ENCODE measurements at regions of chr10 and their contacts with region 1.

Region 1: GRCh38 chr10:23994479-23995046 is 214.4 kb upstream of the KIAA1217 start:
- H3K4me3 ChIP-seq: no peak overlapping the region
- H3K27ac ChIP-seq: no peak overlapping the region
- H3K4me1 ChIP-seq: no peaks in the 10 kb centered on the region
- CTCF ChIP-seq: no peak; the same call in 1 of the 2 replicates

Region 2: GRCh38 chr10:23793577-23793976 is 201.0 kb before region 1 on chr10:
- CTCF ChIA-PET with region 1: no interaction called
- POLR2A ChIA-PET with region 1: no interaction called
- H3K4me3 ChIP-seq: no peak overlapping the region
- H3K27ac ChIP-seq: no peak overlapping the region
- H3K4me1 ChIP-seq: no peaks in the 10 kb centered on the region
- CTCF ChIP-seq: no peak

Region 3: DNA sequence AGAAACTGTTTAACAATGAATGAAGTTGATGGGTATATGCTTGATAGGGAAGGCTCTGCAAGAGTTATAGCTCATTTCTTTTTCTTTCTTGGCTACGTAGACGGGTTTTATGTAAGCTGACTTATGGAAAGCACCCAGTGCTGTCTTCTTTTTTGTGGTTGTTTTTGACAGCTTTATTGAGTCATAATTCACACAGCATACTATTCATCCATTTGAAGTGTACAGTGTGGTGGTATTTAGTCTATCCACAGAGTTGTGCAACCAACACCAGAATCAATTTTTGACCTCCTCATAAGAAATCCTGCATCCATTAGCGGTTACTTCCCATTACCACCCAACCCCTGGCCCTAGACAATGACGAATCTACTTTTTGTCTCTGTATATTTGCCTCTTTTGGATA is 26.3 kb before region 1 on chr10:
- CTCF ChIA-PET with region 1: no interaction called
- POLR2A ChIA-PET with region 1: no interaction called
- H3K4me3 ChIP-seq: no peak overlapping the region
- H3K27ac ChIP-seq: no peak overlapping the region
- H3K4me1 ChIP-seq: no peaks in the 10 kb centered on the region
- CTCF ChIP-seq: no peak

Region 4: GRCh38 chr10:23981520-23982309 is 12.8 kb before region 1 on chr10:
- CTCF ChIA-PET with region 1: interaction called, 24 read pairs
- POLR2A ChIA-PET with region 1: no interaction called
- H3K4me3 ChIP-seq: no peak overlapping the region
- H3K27ac ChIP-seq: no peak overlapping the region
- H3K4me1 ChIP-seq: peaks cover 22% of the 10 kb centered on the region
- CTCF ChIP-seq: no peak

Region 5: DNA sequence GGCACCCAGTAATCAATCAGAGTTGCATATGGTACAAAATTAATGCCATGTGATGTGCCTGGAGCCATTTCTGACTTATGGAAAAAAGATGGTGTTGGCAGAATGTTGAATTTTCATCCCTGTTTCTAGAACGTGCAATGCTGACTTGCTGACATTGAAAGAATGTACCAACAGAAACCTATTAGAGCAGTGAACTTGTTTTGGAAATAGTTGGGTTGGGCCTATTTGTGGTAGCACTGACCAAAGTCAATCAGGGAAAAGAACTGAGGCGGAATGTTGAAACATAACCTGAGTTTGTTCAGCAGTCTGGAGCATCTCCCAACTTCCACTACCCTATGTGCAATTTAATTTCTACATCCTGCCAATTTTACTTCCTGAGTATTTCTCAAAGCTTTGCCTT is 202.7 kb after region 1 on chr10:
- CTCF ChIA-PET with region 1: interaction called, 17 read pairs
- POLR2A ChIA-PET with region 1: no interaction called
- H3K4me3 ChIP-seq: no peak overlapping the region
- H3K27ac ChIP-seq: no peak overlapping the region
- H3K4me1 ChIP-seq: no peaks in the 10 kb centered on the region
- CTCF ChIP-seq: no peak

Region 6: GRCh38 chr10:24360282-24361127 is 365.9 kb after region 1 on chr10:
- CTCF ChIA-PET with region 1: interaction called, 32 read pairs
- POLR2A ChIA-PET with region 1: no interaction called
- H3K4me3 ChIP-seq: no peak overlapping the region
- H3K27ac ChIP-seq: no peak overlapping the region
- H3K4me1 ChIP-seq: no peaks in the 10 kb centered on the region
- CTCF ChIP-seq: peak; percentile 55

Region 7: DNA sequence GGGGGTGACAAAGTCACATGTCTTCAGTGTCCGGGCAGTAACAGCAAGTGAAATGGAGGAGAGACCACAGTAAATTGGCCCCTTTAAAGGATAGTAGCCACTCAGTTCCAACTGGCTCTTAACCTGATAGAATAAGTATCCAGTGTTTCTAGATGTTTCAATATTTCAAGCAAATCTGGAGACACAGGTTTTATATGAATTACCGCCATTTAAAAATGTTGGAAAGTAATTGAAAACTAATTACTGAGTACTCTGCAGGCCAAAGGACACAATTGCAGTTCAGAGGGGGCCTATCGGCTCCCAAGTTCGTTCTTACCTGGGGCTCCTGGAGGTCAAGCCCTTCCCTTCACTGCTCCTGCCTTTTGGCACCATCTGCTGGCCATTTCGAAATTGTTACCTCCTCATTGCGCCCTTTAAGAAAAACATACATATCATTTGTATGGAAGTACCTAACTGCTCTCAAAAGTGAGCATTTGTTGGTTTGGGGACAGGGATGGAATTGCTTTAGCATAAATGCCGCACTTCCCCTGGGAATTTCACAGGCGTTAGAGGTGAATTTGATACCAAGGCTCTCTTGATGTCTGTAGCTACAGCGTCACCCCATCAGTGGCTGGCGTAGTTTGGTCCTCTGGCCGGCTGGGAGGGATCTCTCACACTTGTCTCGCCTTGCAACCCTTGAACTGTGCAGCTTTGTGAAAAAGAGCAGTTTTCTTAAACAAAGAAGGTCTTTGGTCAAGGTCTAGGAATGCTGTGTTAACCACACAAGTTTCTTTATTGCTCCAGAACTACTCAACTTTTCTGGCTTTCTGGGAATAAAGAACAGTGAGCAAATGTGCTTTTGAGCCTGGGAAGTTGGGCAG is 509.1 kb after region 1 on chr10:
- CTCF ChIA-PET with region 1: interaction called, 10 read pairs
- POLR2A ChIA-PET with region 1: no interaction called
- H3K4me3 ChIP-seq: no peak overlapping the region
- H3K27ac ChIP-seq: no peak overlapping the region
- H3K4me1 ChIP-seq: no peaks in the 10 kb centered on the region
- CTCF ChIP-seq: peak; percentile 53; the same call in 1 of the 2 replicates